Dendritic cell treated with granulocyte-macrophage colony-stimulating factor and Interleukin-4, amounts not matched to agents 40 ng/mL and 50 ng/mL, for 4 days (primary cell): ENCODE measurements at regions of chr5 and their contacts with region 1.

Region 1: DNA sequence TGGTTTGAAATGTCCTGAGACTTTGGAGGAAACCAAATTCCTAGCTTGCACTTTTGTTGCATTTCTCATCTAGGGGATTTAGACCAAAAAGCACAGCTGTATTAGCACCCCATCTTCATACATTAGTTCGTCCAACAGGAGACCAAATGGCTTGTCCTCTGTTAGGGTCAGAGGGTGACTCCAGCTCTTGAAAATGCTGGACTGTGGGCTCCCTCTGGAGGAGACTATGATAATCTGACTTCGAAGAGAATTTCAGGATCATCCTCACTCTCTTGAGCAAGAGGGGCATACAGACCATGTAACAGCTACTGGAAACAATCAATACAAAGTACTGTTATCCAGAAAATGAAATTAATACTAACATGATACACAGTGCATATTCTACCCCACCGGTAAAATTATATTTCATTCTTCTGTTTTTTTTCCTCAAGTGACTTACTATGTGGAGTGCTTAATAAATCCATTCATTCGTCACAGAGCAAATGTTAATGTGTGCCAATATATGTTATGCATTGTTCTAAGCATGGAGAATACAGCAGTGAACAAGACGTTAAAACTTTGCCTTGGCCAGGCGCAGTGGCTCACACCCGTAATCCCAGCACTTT is 63.7 kb upstream of the PPP2CA start:
- H3K4me3 Mint-ChIP-seq: no peak overlapping the region
- H3K27ac Mint-ChIP-seq: no peak overlapping the region
- H3K4me1 Mint-ChIP-seq: no peaks in the 10 kb centered on the region
- H3K27me3 Mint-ChIP-seq: peaks cover 7% of the 10 kb centered on the region

Region 2: GRCh38 chr5:133968049-133968980 is 321.3 kb before region 1 on chr5 and contains the start of gene C5orf15:
- intact Hi-C with region 1: no loop called
- H3K4me3 Mint-ChIP-seq: peak within 1 kb of the TSS; percentile 90
- H3K27ac Mint-ChIP-seq: peak within 1 kb of the TSS; percentile 97
- H3K4me1 Mint-ChIP-seq: peaks cover 29% of the 10 kb centered on the region
- H3K27me3 Mint-ChIP-seq: no peaks in the 10 kb centered on the region

Region 3: GRCh38 chr5:134184155-134185135 is 105.2 kb before region 1 on chr5:
- intact Hi-C with region 1: loop called (anchors 1 kb)
- H3K4me3 Mint-ChIP-seq: no peak overlapping the region
- H3K27ac Mint-ChIP-seq: no peak overlapping the region
- H3K4me1 Mint-ChIP-seq: no peaks in the 10 kb centered on the region
- H3K27me3 Mint-ChIP-seq: no peaks in the 10 kb centered on the region

Region 4: GRCh38 chr5:134249469-134250379 is 39.9 kb before region 1 on chr5:
- intact Hi-C with region 1: no loop called
- H3K4me3 Mint-ChIP-seq: no peak overlapping the region
- H3K27ac Mint-ChIP-seq: peak overlapping the region; percentile 79
- H3K4me1 Mint-ChIP-seq: peaks cover 35% of the 10 kb centered on the region
- H3K27me3 Mint-ChIP-seq: no peaks in the 10 kb centered on the region